ENCODE measurements at regions of chr5 and their contacts with region 1.

Region 1: GRCh38 chr5:95822542-95823181 is at the start of gene GLRX:
- DNase-seq: peak; percentile 84
- ATAC-seq: peak; percentile 72
- total RNA-seq, gene GLRX: 111 TPM

Region 2: GRCh38 chr5:95781101-95781583 is 41.5 kb before region 1 on chr5:
- intact Hi-C with region 1: loop called (anchors 5 kb)
- DNase-seq: peak; percentile 88
- ATAC-seq: peak; percentile 91

Region 3: GRCh38 chr5:95858661-95859326 is 36.1 kb after region 1 on chr5:
- intact Hi-C with region 1: no loop called
- DNase-seq: peak; percentile 96
- ATAC-seq: peak; percentile 74